Activated T-helper 1 cell treated with anti-CD3 and anti-CD28 coated beads, Interleukin-12 subunit alpha, Interleukin-12 subunit beta, Interleukin-2, Interleukin-4 antibody, amounts not matched to agents 30 ng/mL and 10 ng/mL and 1 ng/mL, durations not matched to agents 14 hours and 24 hours and 36 hours (primary cell): ENCODE measurements at regions of chr20 and their contacts with region 1.

Region 1: GRCh38 chr20:25223179-25223661 is 24.7 kb upstream of the PYGB start:
- DNase-seq: no peak
- H3K4me3 Mint-ChIP-seq: no peak overlapping the region
- H3K27ac Mint-ChIP-seq: peak overlapping the region; percentile 26
- H3K4me1 Mint-ChIP-seq: peaks cover 6% of the 10 kb centered on the region
- H3K27me3 Mint-ChIP-seq: no peaks in the 10 kb centered on the region

Region 2: DNA sequence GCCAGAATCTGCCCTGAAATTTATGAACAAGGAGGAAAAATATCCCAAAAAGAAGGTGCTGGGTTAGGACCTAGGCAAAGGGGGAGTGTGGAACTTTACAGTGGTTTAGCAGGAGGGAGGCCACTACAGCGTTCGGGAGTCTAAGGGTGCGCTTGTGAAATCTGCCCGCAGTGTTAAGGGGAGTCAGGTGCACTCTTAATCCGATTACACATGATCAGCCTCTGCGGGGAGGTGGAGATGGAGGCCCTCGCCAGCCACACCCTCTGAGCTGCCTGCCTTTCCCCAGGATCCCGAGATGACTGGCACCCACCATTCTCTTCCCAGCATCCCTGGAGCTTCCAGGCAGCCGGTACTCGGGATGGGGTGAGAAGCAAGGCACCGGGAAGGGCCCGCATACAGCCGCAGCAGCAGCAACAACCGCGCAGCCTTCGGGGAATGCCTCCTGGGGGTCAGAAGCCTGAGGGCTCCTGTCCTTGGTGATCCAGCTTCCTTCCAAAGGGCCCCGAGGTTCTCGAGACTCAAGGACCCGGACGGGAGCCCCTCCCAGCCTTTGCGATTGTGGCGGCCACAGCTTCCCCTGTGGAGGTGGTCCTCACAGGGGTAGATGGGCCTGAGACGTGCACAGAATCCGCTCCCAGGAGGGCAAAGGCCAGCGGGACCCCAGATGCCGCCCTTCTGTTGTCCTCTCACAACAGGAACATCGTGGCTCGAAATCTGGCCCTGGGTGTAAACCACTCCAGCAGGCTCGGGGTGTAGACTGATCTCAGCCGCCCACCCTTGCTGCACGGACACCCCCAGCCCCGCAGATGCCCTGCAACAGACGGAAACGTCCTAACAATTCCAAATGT is 331.4 kb before region 1 on chr20:
- intact Hi-C with region 1: no loop called
- DNase-seq: no peak
- H3K4me3 Mint-ChIP-seq: no peak overlapping the region
- H3K27ac Mint-ChIP-seq: no peak overlapping the region
- H3K4me1 Mint-ChIP-seq: no peaks in the 10 kb centered on the region
- H3K27me3 Mint-ChIP-seq: peaks cover 2% of the 10 kb centered on the region

Region 3: DNA sequence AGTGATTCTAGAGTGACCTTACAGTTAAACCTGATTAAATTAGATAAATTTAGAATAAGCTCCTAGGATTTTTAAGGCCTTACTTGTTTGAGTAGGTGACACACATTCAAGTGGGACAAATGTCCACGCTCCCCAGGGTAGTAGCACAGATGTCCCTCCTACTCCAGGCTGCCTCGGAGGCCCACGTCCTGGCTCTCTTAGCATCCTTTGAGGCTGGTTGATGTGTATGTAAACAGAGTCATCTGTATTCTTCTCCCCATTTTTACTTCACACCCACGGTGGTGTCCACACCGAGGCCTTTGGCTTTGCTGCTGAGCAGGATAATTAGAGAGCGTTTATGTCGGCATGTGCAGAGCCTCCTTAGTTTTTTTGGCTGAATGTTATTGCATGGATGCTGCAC is 11.9 kb before region 1 on chr20:
- intact Hi-C with region 1: loop called (anchors 1 kb)
- DNase-seq: no peak
- H3K4me3 Mint-ChIP-seq: no peak overlapping the region
- H3K27ac Mint-ChIP-seq: no peak overlapping the region
- H3K4me1 Mint-ChIP-seq: no peaks in the 10 kb centered on the region
- H3K27me3 Mint-ChIP-seq: no peaks in the 10 kb centered on the region

Region 4: DNA sequence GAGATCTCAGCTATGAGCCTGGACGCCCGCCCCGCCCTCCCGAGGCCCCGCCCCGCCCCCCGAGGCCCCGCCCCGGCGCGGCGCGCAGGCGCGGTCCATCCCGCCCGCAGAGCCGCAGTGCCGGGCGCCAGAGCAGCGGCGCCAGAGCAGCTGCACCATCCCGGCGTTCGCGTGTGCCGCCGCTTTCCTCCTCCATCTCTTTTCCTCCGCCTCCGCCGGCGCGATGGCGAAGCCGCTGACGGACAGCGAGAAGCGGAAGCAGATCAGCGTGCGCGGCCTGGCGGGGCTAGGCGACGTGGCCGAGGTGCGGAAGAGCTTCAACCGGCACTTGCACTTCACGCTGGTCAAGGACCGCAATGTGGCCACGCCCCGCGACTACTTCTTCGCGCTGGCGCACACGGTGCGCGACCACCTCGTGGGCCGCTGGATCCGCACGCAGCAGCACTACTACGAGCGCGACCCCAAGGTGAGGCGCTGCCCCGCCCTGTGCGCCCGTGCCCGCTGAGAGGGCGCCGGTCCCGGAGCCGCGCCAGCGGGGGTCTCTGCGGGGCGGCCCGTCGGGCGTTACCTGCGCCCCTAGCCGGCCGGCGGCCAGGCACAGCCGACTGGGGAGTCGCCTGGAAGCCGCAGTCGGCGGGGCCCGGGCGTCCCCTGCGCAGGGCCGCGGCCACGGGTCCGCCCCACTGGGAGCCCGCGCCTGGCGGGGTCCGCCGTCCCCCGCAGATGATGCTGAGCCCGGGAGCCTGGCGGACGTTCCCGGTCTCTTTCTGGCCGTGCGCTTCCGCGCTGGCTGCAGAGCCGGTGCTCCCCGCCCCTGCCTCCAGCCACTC is 25.0 kb after region 1 on chr20 and contains the start of gene PYGB:
- intact Hi-C with region 1: loop called (anchors 2 kb)
- DNase-seq: peak; percentile 69
- H3K4me3 Mint-ChIP-seq: peak within 1 kb of the TSS; percentile 92
- H3K27ac Mint-ChIP-seq: peak within 1 kb of the TSS; percentile 87
- H3K4me1 Mint-ChIP-seq: peaks cover 43% of the 10 kb centered on the region
- H3K27me3 Mint-ChIP-seq: no peaks in the 10 kb centered on the region
- total RNA-seq, gene PYGB: 36.8 and 38.5 TPM in 2 replicates

Region 5: GRCh38 chr20:25372584-25373336 is 149.5 kb after region 1 on chr20:
- intact Hi-C with region 1: no loop called
- DNase-seq: no peak
- H3K4me3 Mint-ChIP-seq: no peak overlapping the region
- H3K27ac Mint-ChIP-seq: no peak overlapping the region
- H3K4me1 Mint-ChIP-seq: peaks cover 24% of the 10 kb centered on the region
- H3K27me3 Mint-ChIP-seq: no peaks in the 10 kb centered on the region